ENCODE measurements at regions of chr9 and their contacts with region 1.

Region 1: DNA sequence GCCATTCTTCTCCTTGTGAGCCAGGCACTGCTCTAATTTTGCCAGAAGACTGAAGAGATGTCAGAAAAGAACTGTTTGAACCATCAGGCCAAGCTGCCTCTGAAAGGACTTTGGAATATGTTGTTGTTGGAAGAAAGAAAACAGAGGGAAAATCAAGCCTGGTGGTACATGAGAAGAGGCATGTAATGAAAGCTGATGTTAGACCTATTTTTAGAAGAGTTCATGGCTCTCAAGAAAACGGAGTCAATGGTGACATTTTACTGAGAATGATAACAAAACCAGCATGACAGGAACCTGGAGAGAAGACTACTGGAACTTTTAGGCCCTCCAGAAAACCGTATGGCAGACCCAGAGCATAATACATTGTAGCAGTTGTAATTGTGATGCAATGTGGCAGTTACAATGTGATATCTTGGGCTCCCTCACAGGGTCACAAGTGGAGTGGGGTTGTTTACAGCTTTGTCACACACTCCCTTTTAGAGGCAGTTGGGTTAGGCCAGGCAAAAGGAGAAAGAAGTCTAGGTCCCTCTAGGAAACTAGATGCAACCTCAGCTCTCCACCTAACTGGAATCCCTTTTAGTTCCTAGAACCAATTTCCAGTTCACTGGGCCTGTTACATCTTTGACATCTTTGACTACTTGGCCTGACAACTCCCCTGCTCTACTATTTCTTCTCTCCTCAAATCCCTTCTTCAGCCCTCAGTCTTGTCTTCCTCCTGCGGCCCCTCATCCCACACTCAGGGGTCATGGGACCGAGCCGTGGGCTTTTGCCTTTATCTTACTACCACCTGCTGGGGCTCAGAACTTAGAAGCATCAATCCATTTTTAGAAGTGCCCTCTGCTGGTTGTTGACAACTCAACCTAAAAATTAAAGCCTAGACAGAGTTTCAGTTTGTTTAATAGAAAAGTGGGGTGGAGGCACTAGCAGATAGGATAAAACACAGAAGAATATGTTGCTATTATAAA is 61.2 kb upstream of the JAK2 start:
- DNase-seq: peak; percentile 19 to 79 (median 47)
- ATAC-seq: peak; percentile 82
- H3K4me3 ChIP-seq: no peak overlapping the region
- H3K27ac ChIP-seq: peak overlapping the region; percentile 65
- H3K4me1 ChIP-seq: peaks cover 8 to 43% of the 10 kb centered on the region in 2 experiments
- H3K27me3 ChIP-seq: no peaks in the 10 kb centered on the region
- CTCF ChIP-seq: peak; percentile 59 to 95 (median 94)
- EP300 ChIP-seq: peak; percentile 52; the same call in 1 of the 2 replicates
- POLR2A ChIP-seq: no peak
- RAD21 ChIP-seq: peak; percentile 76 to 87

Region 2: GRCh38 chr9:4762108-4762885 is 161.6 kb before region 1 on chr9:
- CTCF ChIA-PET with region 1: interaction called, 4 read pairs
- POLR2A ChIA-PET with region 1: interaction called, 5 read pairs
- in situ Hi-C with region 1: no loop called
- intact Hi-C with region 1: loop called (anchors 1 kb)
- DNase-seq: peak; percentile 25 to 86 (median 38)
- ATAC-seq: peak; percentile 75
- H3K4me3 ChIP-seq: peak overlapping the region; percentile 7; the same call in 1 of the 2 replicates
- H3K27ac ChIP-seq: peak overlapping the region; percentile 62
- H3K4me1 ChIP-seq: peaks cover 8 to 12% of the 10 kb centered on the region in 2 experiments; a peak in 4 of 5 replicates
- H3K27me3 ChIP-seq: no peaks in the 10 kb centered on the region
- CTCF ChIP-seq: peak; percentile 71 to 83 (median 76)
- EP300 ChIP-seq: no peak
- POLR2A ChIP-seq: no peak
- RAD21 ChIP-seq: peak; percentile 82 to 92

Region 3: GRCh38 chr9:4792572-4793458 is 131.0 kb before region 1 on chr9 and contains the start of gene RCL1:
- CTCF ChIA-PET with region 1: no interaction called
- POLR2A ChIA-PET with region 1: interaction called, 4 read pairs
- in situ Hi-C with region 1: no loop called
- intact Hi-C with region 1: loop called (anchors 10 kb)
- DNase-seq: peak; percentile 92 to 95 (median 94)
- ATAC-seq: peak; percentile 97
- H3K4me3 ChIP-seq: peak within 1 kb of the TSS; percentile 91
- H3K27ac ChIP-seq: peak within 1 kb of the TSS; percentile 91
- H3K4me1 ChIP-seq: peaks cover 10 to 16% of the 10 kb centered on the region in 2 experiments; a peak in 4 of 5 replicates
- H3K27me3 ChIP-seq: no peaks in the 10 kb centered on the region
- CTCF ChIP-seq: no peak
- EP300 ChIP-seq: no peak
- POLR2A ChIP-seq: peak; percentile 81
- RAD21 ChIP-seq: no peak
- polyA plus RNA-seq, gene RCL1: 36.9 to 46.1 TPM

Region 4: GRCh38 chr9:4849364-4849763 is 74.5 kb before region 1 on chr9:
- CTCF ChIA-PET with region 1: interaction called, 6 read pairs
- POLR2A ChIA-PET with region 1: no interaction called
- in situ Hi-C with region 1: no loop called
- intact Hi-C with region 1: loop called (anchors 1 kb)
- DNase-seq: no peak
- ATAC-seq: peak; percentile 11; the same call in 1 of the 3 replicates
- H3K4me3 ChIP-seq: no peak overlapping the region
- H3K27ac ChIP-seq: peak overlapping the region; percentile 59; the same call in 2 of the 3 replicates
- H3K4me1 ChIP-seq: peaks cover 36 to 56% of the 10 kb centered on the region in 2 experiments
- H3K27me3 ChIP-seq: no peaks in the 10 kb centered on the region
- CTCF ChIP-seq: peak in 2 of 3 experiments; percentile 22 to 44; a peak in 1 of 6 replicates
- EP300 ChIP-seq: no peak
- POLR2A ChIP-seq: no peak
- RAD21 ChIP-seq: peak in 1 of 2 experiments; percentile 54; a peak in 3 of 4 replicates

Region 5: DNA sequence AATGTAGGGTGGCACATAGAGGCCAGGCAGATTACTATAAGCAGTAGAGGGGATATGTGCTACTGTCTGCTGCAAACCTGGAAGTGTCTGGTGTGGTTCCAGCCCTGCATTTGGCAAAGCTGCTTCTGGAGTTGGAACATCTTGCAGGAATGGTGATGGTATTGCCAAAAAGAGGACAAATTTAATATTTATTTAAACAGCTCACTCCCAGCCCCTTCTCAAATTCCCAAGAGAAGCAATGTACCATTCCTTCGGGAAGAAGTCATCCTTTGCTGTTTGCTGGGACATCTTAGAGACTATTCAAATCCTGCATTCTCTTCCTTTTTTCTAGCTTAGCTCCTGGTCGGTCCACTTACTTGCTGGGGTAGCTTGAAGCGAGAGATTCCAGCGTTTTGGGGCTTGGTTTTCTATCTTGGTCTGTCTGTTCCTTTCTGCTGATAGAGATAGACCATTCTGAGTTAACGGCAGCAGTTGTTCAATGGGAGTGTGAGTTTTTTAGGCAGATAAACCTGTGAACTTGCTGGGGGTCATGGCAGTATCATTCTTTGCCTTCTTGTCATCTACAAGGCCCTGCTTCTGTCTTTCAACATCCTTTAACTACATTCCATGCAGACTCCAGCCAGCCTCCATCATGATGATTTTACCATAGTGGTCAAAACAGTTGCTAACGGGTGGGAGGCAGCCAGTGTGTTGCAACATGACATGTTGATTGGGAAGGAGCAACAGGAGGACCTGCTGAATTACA is 61.2 kb before region 1 on chr9:
- CTCF ChIA-PET with region 1: no interaction called
- POLR2A ChIA-PET with region 1: interaction called, 3 read pairs
- in situ Hi-C with region 1: no loop called
- intact Hi-C with region 1: loop called (anchors 2 kb)
- DNase-seq: peak; percentile 79 to 93 (median 82)
- ATAC-seq: peak; percentile 80
- H3K4me3 ChIP-seq: no peak overlapping the region
- H3K27ac ChIP-seq: peak overlapping the region; percentile 83
- H3K4me1 ChIP-seq: peaks cover 49 to 81% of the 10 kb centered on the region in 2 experiments
- H3K27me3 ChIP-seq: no peaks in the 10 kb centered on the region
- CTCF ChIP-seq: no peak
- EP300 ChIP-seq: peak; percentile 98
- POLR2A ChIP-seq: no peak
- RAD21 ChIP-seq: peak in 1 of 2 experiments; percentile 17; a peak in 1 of 4 replicates